ENCODE measurements at regions of chr2 and their contacts with region 1.

Region 1: GRCh38 chr2:47862949-47863348 is 43.3 kb downstream of the FBXO11 start:
- DNase-seq: no peak
- H3K4me3 ChIP-seq: no peak overlapping the region
- H3K27ac ChIP-seq: no peak overlapping the region
- H3K4me1 ChIP-seq: peaks cover 8 to 22% (median 10%) of the 10 kb centered on the region in 4 experiments
- H3K27me3 ChIP-seq: no peaks in the 10 kb centered on the region

Region 2: GRCh38 chr2:47541848-47542450 is 321.0 kb before region 1 on chr2:
- CTCF ChIA-PET with region 1: no interaction called
- POLR2A ChIA-PET with region 1: no interaction called
- DNase-seq: no peak
- H3K4me3 ChIP-seq: no peak overlapping the region
- H3K27ac ChIP-seq: no peak overlapping the region
- H3K4me1 ChIP-seq: no peaks in the 10 kb centered on the region
- H3K27me3 ChIP-seq: peaks cover 0 to 3% (median 0%) of the 10 kb centered on the region in 5 experiments

Region 3: DNA sequence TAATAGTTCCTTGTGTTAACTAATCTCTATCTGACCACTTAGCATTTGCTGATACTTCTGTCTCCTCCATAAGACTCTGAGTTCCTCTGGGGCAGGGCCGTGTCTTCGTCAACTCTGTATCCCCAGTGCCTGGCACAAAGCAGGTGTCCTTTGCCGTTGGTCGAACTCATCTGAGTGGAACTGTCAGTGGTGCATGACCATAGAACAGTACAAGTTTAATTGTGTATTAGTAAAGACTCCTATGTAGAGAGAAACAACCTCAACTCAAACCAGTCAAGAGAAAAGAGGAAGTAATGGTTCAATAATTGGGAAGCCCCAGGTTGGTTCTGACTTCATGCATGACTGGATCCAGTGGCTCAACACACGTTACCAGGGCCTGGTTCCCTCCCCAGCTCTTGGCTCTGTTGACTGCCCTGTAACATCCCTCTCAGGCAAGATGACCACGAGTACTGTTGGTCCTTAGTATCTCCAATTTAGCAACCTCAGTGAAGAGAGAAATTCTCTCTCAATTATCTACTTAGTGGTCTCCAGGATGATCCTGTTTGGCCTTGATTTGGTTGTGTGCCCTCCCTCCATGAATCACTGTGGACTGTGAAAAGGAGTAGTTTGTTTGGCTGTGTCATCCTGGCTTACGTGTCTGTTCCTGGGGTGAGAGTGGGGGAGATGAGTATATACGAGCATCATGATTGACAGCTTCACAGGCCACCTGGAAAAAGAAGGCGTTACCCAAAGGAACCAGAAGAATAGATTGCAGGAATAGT is 138.5 kb before region 1 on chr2:
- CTCF ChIA-PET with region 1: no interaction called
- POLR2A ChIA-PET with region 1: no interaction called
- DNase-seq: peak; percentile 30 to 64 (median 42)
- H3K4me3 ChIP-seq: no peak overlapping the region
- H3K27ac ChIP-seq: no peak overlapping the region
- H3K4me1 ChIP-seq: no peaks in the 10 kb centered on the region
- H3K27me3 ChIP-seq: no peaks in the 10 kb centered on the region

Region 4: DNA sequence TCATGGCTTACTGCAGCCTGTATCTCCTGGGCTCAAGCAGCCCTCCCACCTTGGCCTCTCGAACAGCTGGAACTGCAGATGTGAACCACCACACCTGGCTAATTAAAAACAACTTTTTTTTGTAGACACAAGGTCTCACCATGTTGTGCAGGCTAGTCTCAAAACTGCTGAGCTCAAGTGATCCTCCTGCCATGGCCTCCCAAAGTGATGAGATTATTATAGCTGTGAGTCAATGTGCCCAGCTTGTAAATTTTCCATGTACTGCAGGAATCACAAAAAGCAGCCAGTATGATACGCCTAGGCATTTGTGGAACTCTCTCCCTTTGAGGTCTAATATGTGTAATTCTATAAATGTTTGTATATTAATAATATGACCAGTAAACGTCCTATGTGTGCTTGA is 20.1 kb before region 1 on chr2:
- CTCF ChIA-PET with region 1: interaction called, 12 read pairs
- POLR2A ChIA-PET with region 1: no interaction called
- DNase-seq: no peak
- H3K4me3 ChIP-seq: no peak overlapping the region
- H3K27ac ChIP-seq: no peak overlapping the region
- H3K4me1 ChIP-seq: peaks cover 0 to 2% (median 0%) of the 10 kb centered on the region in 4 experiments
- H3K27me3 ChIP-seq: no peaks in the 10 kb centered on the region

Region 5: DNA sequence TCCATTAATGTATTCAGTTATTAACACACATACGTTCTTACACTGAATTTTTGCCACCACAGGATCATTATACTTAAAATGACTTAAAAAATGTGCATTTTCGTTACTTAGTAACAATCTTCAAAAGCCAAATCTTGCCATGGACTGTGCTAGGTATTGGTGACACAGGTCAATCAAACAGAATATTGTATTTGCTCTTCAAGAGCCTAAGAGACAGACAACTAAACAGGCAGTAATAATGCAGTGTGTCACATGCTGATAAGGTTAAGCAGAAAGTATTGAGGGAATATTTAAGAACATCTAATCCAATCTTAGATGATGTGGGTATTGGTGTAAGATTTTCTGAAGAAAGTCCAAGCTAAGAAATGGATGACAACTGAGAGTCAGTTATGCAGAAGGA is 13.6 kb before region 1 on chr2:
- CTCF ChIA-PET with region 1: interaction called, 11 read pairs
- POLR2A ChIA-PET with region 1: no interaction called
- DNase-seq: no peak
- H3K4me3 ChIP-seq: no peak overlapping the region
- H3K27ac ChIP-seq: no peak overlapping the region
- H3K4me1 ChIP-seq: peaks cover 0 to 2% (median 0%) of the 10 kb centered on the region in 4 experiments
- H3K27me3 ChIP-seq: no peaks in the 10 kb centered on the region

Region 6: GRCh38 chr2:47906157-47907038 is 43.4 kb after region 1 on chr2 and contains the start of gene FBXO11:
- CTCF ChIA-PET with region 1: interaction called, 24 read pairs
- POLR2A ChIA-PET with region 1: interaction called, 4 read pairs
- DNase-seq: peak; percentile 99 to 100 (median 99)
- H3K4me3 ChIP-seq: peak within 1 kb of the TSS; percentile 75 to 99 (median 93)
- H3K27ac ChIP-seq: peak within 1 kb of the TSS; percentile 91 to 97
- H3K4me1 ChIP-seq: peaks cover 5 to 29% (median 19%) of the 10 kb centered on the region in 4 experiments
- H3K27me3 ChIP-seq: no peaks in the 10 kb centered on the region

Region 7: DNA sequence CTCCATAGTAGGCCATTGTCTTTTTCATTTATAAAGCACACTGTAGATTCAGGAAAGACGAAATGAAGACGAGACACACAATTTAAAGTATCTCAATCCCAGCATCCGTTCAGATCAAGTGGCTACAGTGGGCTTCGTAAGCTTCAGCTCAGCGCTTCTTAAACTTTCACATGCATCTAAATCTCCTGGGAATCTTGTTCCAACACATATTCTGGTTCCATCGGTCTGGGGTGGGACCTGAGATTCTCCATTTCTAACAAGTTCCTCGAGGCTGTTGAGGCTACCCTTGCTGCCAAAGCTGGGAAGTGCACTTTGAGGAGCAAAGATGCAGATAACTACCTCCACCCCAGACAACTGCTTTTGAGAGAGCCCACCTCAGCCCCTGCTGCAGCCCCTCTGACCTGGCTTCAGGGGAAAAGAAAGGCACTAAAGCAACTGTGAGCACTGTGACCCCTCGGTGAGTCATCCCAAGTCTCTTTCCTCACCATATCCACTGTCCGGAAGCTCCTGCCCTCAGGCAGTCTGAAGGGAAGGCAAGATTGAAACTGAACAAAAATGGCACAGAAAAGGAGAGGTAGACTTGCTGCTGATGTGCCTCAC is 244.5 kb after region 1 on chr2:
- CTCF ChIA-PET with region 1: interaction called, 43 read pairs
- POLR2A ChIA-PET with region 1: no interaction called
- DNase-seq: no peak
- H3K4me3 ChIP-seq: no peak overlapping the region
- H3K27ac ChIP-seq: no peak overlapping the region
- H3K4me1 ChIP-seq: peaks cover 0 to 30% (median 18%) of the 10 kb centered on the region in 4 experiments
- H3K27me3 ChIP-seq: no peaks in the 10 kb centered on the region

Region 8: DNA sequence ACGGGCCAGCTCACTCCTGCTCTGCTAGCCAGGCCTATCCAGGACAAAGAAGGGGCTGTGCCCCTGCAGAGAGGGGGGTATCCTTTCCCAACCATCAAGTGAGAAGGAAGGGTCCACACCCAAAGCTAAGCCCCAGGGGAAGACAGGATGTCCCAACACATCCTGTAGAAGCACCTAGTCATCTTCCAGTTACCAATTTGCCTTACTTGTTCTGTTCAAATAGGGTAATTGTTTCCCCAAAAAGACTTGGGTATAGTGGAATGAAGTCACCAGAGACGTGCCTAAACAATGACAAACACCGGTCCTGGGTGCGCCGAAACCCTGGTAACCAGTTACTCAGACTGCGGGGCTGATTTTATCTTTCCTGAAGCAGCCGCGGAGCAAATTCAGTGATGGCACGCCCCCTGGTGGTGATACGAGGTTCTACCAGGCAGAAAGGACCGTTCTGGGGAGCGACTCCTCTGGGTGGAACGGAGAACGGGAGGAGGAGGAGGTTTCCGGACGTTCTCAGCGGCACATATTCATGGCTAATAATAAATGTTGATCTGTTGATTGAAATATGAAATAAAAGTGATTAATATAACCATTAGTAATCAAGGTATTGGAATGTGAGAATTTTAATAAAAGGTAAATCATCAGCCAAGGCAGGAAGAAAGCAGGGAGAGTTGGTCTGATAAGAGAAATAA is 557.7 kb after region 1 on chr2:
- CTCF ChIA-PET with region 1: interaction called, 12 read pairs
- POLR2A ChIA-PET with region 1: no interaction called
- DNase-seq: peak; percentile 87 to 93 (median 93)
- H3K4me3 ChIP-seq: peak overlapping the region in 4 of 7 experiments; percentile 19 to 66 (median 49)
- H3K27ac ChIP-seq: peak overlapping the region in 1 of 2 experiments; percentile 20
- H3K4me1 ChIP-seq: peaks cover 5 to 31% (median 15%) of the 10 kb centered on the region in 4 experiments
- H3K27me3 ChIP-seq: no peaks in the 10 kb centered on the region

Measured in common myeloid progenitor, CD34-positive (primary cell).